Lower lobe of right lung (tissue), 2 donors: ENCODE measurements at regions of chr1 and their contacts with region 1.

Region 1: GRCh38 chr1:26145041-26145959 is 13.6 kb upstream of the FAM110D start:
- DNase-seq: peak; percentile 80
- ATAC-seq: peak; percentile 91 to 93
- H3K4me3 ChIP-seq: no peak overlapping the region
- H3K27ac ChIP-seq: no peak overlapping the region
- H3K4me1 ChIP-seq: no peaks in the 10 kb centered on the region
- H3K27me3 ChIP-seq: no peaks in the 10 kb centered on the region
- CTCF ChIP-seq: peak; percentile 83

Region 2: GRCh38 chr1:26109229-26110164 is 35.8 kb before region 1 on chr1:
- intact Hi-C with region 1: loop called (anchors 5 kb)
- DNase-seq: no peak
- ATAC-seq: no peak
- H3K4me3 ChIP-seq: no peak overlapping the region
- H3K27ac ChIP-seq: no peak overlapping the region
- H3K4me1 ChIP-seq: peaks cover 32% of the 10 kb centered on the region
- H3K27me3 ChIP-seq: no peaks in the 10 kb centered on the region
- CTCF ChIP-seq: no peak